ENCODE measurements at regions of chr16 and their contacts with region 1.

Region 1: GRCh38 chr16:53130159-53131049 is 75.6 kb downstream of the CHD9 start:
- DNase-seq: peak; percentile 87 to 99 (median 95)

Region 2: DNA sequence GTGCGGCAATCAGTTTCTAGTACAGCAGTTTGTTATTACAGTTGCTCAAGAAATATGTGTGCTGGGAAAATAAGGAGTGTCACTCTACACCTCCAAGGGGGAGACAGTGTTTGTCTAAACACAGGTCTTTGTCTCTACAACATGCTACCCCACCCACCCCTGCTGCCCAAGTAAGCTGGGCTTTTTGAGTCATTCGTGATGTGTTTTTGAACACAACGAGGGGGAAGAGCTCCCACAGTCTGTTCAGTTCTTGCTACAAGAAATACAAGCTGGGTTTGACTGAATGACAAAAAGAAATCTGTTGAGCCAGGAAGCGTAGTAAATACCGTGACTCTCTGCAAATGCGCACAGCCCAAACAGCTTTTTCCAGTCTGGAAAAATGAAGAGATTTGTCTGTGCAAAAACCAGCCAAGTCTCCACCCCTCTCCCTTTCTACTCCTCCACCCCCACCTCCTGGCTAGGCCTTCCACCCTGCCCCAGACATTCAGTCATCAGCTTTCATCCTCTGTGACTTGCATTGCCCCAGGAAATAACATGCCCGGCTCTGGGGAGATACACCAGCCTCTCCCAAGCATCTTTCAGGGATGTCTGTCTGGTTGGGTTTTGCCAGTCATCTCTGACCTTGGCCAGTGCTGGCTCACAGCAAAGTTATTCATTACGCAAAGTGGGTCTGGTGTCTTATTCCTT is 49.9 kb before region 1 on chr16:
- intact Hi-C with region 1: no loop called
- DNase-seq: peak in 1 of 10 donors; percentile 76

Region 3: DNA sequence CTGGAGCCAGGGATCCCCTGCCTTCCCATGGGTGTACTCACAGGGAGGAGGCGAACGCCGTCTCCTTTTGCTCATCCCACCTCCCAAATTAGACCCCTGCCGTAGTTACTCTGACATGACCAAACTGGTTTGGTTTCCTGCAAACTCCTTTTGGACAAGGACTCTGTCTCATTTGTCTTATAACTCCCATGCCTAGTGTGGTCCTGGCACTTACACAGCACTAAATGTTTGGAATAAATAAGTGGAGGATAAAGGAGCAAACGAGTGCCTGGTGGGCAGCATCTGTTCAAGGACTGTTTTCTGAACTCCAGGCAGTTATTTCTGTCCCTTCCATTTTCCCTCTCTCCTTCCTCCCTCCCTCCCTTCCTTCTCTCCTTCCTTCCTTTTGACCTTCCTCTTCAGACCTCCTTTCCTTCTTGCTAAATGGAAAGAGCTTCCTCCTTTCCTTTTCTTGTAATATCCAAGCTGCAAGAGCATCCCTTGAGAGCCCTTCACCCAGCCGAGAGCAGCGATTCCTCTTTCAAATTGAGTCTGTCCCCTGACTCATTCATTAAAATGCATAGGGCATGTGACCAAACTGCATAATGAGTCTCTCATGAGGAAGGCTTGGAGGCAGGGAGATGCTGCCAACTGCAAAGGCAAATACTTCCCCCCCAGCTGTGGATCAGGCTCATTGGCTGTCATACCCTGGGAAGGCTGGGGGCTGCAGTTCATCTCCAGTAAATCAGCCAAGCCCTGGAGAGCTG is 38.8 kb before region 1 on chr16:
- intact Hi-C with region 1: loop called (anchors 2 kb)
- DNase-seq: peak; percentile 68 to 96 (median 74)

Region 4: GRCh38 chr16:53099318-53100130 is 30.9 kb before region 1 on chr16:
- intact Hi-C with region 1: loop called (anchors 2 kb)
- DNase-seq: peak; percentile 76 to 98 (median 86)

Region 5: GRCh38 chr16:53207810-53208752 is 77.7 kb after region 1 on chr16:
- intact Hi-C with region 1: loop called (anchors 1 kb)
- DNase-seq: peak in 9 of 10 donors; percentile 10 to 81 (median 40)

Region 6: DNA sequence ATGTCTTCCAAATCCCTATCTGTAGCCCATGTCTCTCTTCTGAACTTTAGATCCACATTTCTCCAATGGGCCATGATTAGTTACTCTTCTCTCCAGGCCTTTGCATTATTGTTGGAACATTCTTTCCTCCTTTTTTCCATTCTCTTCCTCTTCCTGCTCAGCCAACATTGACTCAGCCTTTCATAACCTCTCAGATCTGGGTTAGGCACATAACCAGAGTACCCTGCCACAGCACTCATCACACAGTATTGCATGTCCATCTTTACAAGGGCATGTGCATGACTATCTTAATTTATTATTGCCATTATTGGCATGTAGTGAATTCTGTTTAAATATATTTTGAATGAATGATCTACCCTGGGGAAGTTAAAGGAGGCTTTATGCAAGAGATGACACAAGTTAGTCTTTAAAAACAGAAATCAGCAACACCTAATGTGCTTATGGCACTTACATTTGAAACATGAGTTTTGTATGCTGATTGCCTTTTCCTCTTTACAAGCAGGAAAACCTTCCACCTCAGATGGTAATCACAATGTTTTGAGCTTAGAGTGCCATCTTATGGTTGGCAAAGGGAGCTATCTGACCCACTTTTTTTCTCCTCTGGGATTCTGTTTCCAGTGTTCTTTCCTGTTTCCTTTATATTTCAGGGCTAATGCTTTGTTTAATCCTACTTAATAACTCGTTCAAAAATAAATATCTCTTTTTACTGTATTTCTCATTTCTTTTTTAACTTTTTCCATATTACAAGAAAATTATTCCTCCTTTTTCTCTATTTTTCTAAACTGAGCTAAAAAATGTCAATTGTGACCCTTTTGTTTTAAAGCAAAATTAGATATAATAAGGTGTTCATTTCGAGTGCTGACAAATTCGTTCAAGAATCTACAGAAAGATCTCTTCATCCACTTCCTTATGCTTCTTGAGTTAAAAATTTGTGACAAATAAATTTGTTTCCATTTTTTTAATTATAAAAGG is 152.9 kb after region 1 on chr16:
- intact Hi-C with region 1: loop called (anchors 2 kb)
- DNase-seq: no peak